PC-3 (cell line): ENCODE measurements at regions of chr10 and their contacts with region 1.

Region 1: GRCh38 chr10:78964952-78965633 is 103.7 kb upstream of the ZMIZ1 start:
- DNase-seq: peak; percentile 100
- ATAC-seq: peak; percentile 93
- H3K4me3 ChIP-seq: peak overlapping the region; percentile 2; the same call in 1 of the 2 replicates
- H3K27ac ChIP-seq: peak overlapping the region; percentile 66
- H3K4me1 ChIP-seq: peaks cover 37% of the 10 kb centered on the region
- H3K27me3 ChIP-seq: no peaks in the 10 kb centered on the region
- CTCF ChIP-seq: no peak

Region 2: GRCh38 chr10:78756604-78757349 is 208.3 kb before region 1 on chr10:
- CTCF ChIA-PET with region 1: no interaction called
- POLR2A ChIA-PET with region 1: no interaction called
- intact Hi-C with region 1: loop called (anchors 2 kb)
- DNase-seq: peak; percentile 100
- ATAC-seq: peak; percentile 98
- H3K4me3 ChIP-seq: peak overlapping the region; percentile 4; the same call in 1 of the 2 replicates
- H3K27ac ChIP-seq: peak overlapping the region; percentile 73
- H3K4me1 ChIP-seq: peaks cover 28% of the 10 kb centered on the region
- H3K27me3 ChIP-seq: no peaks in the 10 kb centered on the region
- CTCF ChIP-seq: peak; percentile 39; the same call in 1 of the 2 replicates

Region 3: DNA sequence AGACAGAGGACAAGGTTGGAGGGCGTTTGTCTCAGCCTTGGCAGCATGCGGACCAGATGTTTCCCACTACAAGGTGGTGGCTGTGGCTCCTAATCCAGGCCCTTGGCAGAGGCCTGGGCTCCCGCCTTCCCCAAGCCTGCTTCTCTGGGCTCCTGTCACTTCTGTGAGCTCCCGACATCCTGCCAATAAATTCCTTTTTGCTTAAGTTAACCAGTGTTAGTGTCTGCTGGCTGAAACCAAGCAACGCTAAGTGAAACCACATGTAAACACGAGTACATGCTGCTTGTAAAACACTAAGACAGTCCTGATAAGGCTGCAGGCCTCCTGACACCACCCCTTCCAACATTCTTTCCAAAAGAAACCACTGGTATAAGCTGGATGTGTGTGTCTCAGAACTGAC is 159.9 kb before region 1 on chr10:
- CTCF ChIA-PET with region 1: no interaction called
- POLR2A ChIA-PET with region 1: no interaction called
- intact Hi-C with region 1: loop called (anchors 2 kb)
- DNase-seq: peak; percentile 100
- ATAC-seq: peak; percentile 90
- H3K4me3 ChIP-seq: no peak overlapping the region
- H3K27ac ChIP-seq: peak overlapping the region; percentile 40
- H3K4me1 ChIP-seq: peaks cover 59% of the 10 kb centered on the region
- H3K27me3 ChIP-seq: no peaks in the 10 kb centered on the region
- CTCF ChIP-seq: no peak

Region 4: DNA sequence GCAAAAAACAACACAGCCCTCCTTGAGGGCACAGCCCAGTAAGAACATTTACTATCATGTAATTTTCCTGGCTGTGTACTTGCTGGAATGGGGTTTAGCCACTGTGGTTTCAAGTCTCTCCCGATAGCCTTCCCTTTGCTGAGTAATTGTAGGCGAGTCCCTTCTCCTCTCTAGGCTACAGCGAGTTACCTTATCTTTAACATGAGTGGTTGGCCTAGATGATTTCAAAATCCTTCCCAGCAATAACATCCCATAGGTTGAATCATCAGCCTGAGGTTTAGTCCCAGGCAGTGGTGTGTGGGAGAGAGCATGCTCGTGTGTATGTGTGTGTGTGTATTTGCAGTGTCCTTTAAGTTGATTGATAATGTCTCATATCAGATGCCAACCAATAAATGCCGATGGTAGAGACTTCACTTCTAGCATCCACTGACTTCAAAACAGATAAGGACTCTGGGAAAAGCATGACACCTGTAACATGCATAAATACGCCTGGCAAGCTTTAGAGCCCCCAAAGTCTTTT is 39.2 kb before region 1 on chr10:
- CTCF ChIA-PET with region 1: no interaction called
- POLR2A ChIA-PET with region 1: no interaction called
- intact Hi-C with region 1: loop called (anchors 2 kb)
- DNase-seq: peak; percentile 100
- ATAC-seq: peak; percentile 53
- H3K4me3 ChIP-seq: no peak overlapping the region
- H3K27ac ChIP-seq: peak overlapping the region; percentile 65
- H3K4me1 ChIP-seq: peaks cover 51% of the 10 kb centered on the region
- H3K27me3 ChIP-seq: no peaks in the 10 kb centered on the region
- CTCF ChIP-seq: no peak

Region 5: GRCh38 chr10:79052291-79053080 is 87.4 kb after region 1 on chr10:
- CTCF ChIA-PET with region 1: interaction called, 6 read pairs
- POLR2A ChIA-PET with region 1: no interaction called
- intact Hi-C with region 1: loop called (anchors 2 kb)
- DNase-seq: peak; percentile 89
- ATAC-seq: peak; percentile 75
- H3K4me3 ChIP-seq: no peak overlapping the region
- H3K27ac ChIP-seq: no peak overlapping the region
- H3K4me1 ChIP-seq: peaks cover 27% of the 10 kb centered on the region
- H3K27me3 ChIP-seq: no peaks in the 10 kb centered on the region
- CTCF ChIP-seq: peak; percentile 91

Region 6: DNA sequence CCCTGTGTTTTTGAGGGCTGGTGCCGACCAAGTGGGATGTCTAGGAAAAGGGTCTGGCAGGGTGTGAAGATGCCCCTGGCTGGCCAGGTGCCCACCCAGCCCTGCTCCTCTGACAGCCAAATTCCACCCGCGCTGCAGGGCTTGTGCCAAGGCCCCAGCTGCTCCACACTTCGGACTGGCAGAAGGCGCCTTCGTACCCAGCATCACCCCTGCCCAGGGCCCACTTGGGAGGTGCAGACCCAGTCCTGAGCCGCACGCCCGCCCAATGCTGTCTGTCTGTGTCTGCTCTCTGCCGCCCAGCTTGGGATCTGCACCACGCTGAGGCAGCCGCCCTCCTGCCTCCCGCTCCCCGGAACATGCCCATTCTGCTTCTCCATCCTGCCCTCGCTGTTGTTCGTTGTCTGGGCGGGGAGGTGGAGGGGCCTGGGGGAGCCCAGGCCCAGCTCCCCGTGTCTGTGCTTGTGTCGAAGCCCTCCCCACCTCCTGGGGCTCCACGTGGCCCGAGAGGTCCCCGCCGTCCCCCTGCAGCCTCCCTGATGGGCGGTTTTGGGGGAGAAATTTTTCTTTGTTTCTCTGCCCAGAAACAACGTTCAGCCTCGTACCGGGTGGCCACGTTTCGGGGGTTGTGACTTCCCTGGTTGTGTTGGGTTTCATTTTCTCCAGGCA is 345.2 kb after region 1 on chr10:
- CTCF ChIA-PET with region 1: no interaction called
- POLR2A ChIA-PET with region 1: interaction called, 10 read pairs
- intact Hi-C with region 1: no loop called
- DNase-seq: no peak
- ATAC-seq: no peak
- H3K4me3 ChIP-seq: no peak overlapping the region
- H3K27ac ChIP-seq: no peak overlapping the region
- H3K4me1 ChIP-seq: no peaks in the 10 kb centered on the region
- H3K27me3 ChIP-seq: no peaks in the 10 kb centered on the region
- CTCF ChIP-seq: no peak